ENCODE measurements at regions of chr18 and their contacts with region 1.

Region 1: DNA sequence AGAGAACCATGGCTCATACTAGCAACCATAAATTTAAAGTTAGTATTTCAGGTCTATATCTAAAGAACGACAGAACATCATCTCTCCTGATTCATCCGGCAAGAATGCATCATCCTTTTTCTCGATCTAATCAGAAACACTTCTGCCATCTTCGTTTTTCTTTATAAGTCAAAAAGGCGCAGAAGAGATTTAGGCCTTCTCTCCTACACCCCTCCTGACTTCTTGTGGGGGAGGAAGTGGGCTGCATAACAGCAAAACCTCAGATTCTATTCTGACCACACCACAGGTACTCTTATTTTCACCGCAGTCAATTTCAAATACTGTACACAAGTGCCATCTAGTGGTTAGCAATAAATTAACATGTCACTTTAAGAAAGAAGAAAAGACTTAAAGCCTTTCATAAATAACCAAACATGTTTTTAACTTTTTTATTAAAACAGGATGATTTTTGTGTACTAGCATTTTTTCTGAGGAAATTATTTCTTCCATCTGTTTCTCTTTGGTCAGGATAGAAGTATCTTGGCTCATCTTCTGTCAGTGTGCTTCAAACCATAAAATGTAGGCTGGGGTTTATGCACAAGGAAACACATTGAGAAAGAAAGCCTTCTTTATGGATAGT is 48.4 kb upstream of the PIK3C3 start:
- DNase-seq: peak in 1 of 2 experiments; percentile 3
- H3K4me3 ChIP-seq: no peak overlapping the region
- H3K4me3 Mint-ChIP-seq: no peak overlapping the region
- H3K27ac Mint-ChIP-seq: no peak overlapping the region
- H3K4me1 ChIP-seq: no peaks in the 10 kb centered on the region
- H3K4me1 Mint-ChIP-seq: no peaks in the 10 kb centered on the region
- H3K27me3 ChIP-seq: no peaks in the 10 kb centered on the region
- H3K27me3 Mint-ChIP-seq: peaks cover 3% of the 10 kb centered on the region
- CTCF ChIP-seq: peak; percentile 18 to 40

Region 2: DNA sequence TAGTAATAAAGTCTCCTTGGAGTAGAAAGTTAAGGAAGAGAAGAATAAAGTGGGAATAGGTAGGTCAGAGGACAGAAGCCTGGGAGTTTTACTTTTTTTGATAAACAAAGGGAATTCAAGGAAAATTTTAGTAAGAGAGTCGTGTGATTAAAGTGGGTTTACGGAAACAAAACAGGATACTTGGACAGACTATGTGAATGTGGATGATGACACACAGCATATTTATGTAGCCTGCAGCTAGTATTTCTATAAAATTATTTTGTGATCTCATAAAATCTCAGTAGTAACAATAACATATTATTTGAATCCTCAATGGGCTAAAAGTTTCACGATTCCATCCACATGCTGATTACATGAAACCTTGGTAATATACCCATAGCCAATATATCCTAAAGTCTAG is 402.3 kb before region 1 on chr18:
- CTCF ChIA-PET with region 1: no interaction called
- POLR2A ChIA-PET with region 1: no interaction called
- intact Hi-C with region 1: no loop called
- DNase-seq: no peak
- H3K4me3 ChIP-seq: no peak overlapping the region
- H3K4me3 Mint-ChIP-seq: no peak overlapping the region
- H3K27ac Mint-ChIP-seq: no peak overlapping the region
- H3K4me1 ChIP-seq: no peaks in the 10 kb centered on the region
- H3K4me1 Mint-ChIP-seq: no peaks in the 10 kb centered on the region
- H3K27me3 ChIP-seq: no peaks in the 10 kb centered on the region
- H3K27me3 Mint-ChIP-seq: no peaks in the 10 kb centered on the region
- CTCF ChIP-seq: no peak

Region 3: GRCh38 chr18:41745166-41746049 is 161.2 kb before region 1 on chr18:
- CTCF ChIA-PET with region 1: no interaction called
- POLR2A ChIA-PET with region 1: no interaction called
- intact Hi-C with region 1: loop called (anchors 5 kb)
- DNase-seq: peak; percentile 18 to 34
- H3K4me3 ChIP-seq: no peak overlapping the region
- H3K4me3 Mint-ChIP-seq: no peak overlapping the region
- H3K27ac Mint-ChIP-seq: no peak overlapping the region
- H3K4me1 ChIP-seq: no peaks in the 10 kb centered on the region
- H3K4me1 Mint-ChIP-seq: no peaks in the 10 kb centered on the region
- H3K27me3 ChIP-seq: no peaks in the 10 kb centered on the region
- H3K27me3 Mint-ChIP-seq: peaks cover 4% of the 10 kb centered on the region
- CTCF ChIP-seq: peak; percentile 32 to 47

Region 4: DNA sequence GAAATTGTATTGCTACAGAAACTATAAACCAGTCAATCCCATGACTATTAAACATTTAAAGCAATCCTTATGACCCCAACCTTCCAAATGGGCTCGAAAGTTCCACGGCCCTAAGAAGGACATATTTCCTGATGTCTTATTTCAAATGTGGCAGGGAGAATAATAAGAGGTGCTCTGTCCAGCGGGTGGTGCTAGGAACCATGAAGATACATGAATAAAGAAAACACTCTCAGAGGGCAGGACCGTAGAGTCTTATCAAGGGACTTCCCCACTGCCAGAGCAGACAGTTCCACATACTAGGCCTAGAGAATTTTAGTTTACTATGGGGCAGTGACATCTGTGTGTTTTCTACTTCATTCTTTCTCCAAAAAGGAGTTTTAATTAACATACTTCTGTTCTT is 138.7 kb before region 1 on chr18:
- CTCF ChIA-PET with region 1: no interaction called
- POLR2A ChIA-PET with region 1: no interaction called
- intact Hi-C with region 1: loop called (anchors 5 kb)
- DNase-seq: no peak
- H3K4me3 ChIP-seq: no peak overlapping the region
- H3K4me3 Mint-ChIP-seq: no peak overlapping the region
- H3K27ac Mint-ChIP-seq: no peak overlapping the region
- H3K4me1 ChIP-seq: no peaks in the 10 kb centered on the region
- H3K4me1 Mint-ChIP-seq: no peaks in the 10 kb centered on the region
- H3K27me3 ChIP-seq: no peaks in the 10 kb centered on the region
- H3K27me3 Mint-ChIP-seq: no peaks in the 10 kb centered on the region
- CTCF ChIP-seq: no peak

Measured in Caco-2 (cell line).